MCF 10A (cell line): ENCODE measurements at regions of chr14 and their contacts with region 1.

Region 1: DNA sequence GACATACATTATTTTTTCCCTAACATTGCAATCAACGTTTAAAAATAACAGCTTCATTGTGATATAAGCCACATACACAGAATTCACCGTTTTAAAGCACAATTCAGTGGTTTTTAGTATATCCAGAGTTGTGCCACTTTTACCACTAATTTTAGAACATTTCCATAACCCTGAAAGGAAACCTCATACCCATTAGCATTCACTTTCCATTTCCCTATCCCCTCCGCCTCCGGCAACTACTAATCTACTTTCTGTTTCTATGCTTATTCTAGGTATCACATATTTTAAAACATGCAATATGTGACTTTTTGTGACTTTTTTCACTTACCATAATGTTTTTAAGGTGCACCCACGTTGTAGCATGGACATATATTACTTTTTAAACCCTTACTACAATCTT is 55.6 kb upstream of the ISM2 start:
- DNase-seq: no peak
- H3K4me3 Mint-ChIP-seq: no peak overlapping the region
- H3K27ac Mint-ChIP-seq: no peak overlapping the region
- H3K4me1 Mint-ChIP-seq: no peaks in the 10 kb centered on the region
- H3K27me3 Mint-ChIP-seq: no peaks in the 10 kb centered on the region
- CTCF ChIP-seq: no peak

Region 2: GRCh38 chr14:77301103-77301502 is 253.1 kb before region 1 on chr14:
- CTCF ChIA-PET with region 1: interaction called, 12 read pairs
- POLR2A ChIA-PET with region 1: no interaction called
- intact Hi-C with region 1: loop called (anchors 1 kb)
- DNase-seq: peak; percentile 75
- H3K4me3 Mint-ChIP-seq: no peak overlapping the region
- H3K27ac Mint-ChIP-seq: no peak overlapping the region
- H3K4me1 Mint-ChIP-seq: peaks cover 24% of the 10 kb centered on the region
- H3K27me3 Mint-ChIP-seq: no peaks in the 10 kb centered on the region
- CTCF ChIP-seq: peak; percentile 83

Region 3: GRCh38 chr14:77542421-77543239 is 11.6 kb before region 1 on chr14:
- CTCF ChIA-PET with region 1: interaction called, 15 read pairs
- POLR2A ChIA-PET with region 1: interaction called, 4 read pairs
- intact Hi-C with region 1: no loop called
- DNase-seq: no peak
- H3K4me3 Mint-ChIP-seq: no peak overlapping the region
- H3K27ac Mint-ChIP-seq: no peak overlapping the region
- H3K4me1 Mint-ChIP-seq: no peaks in the 10 kb centered on the region
- H3K27me3 Mint-ChIP-seq: no peaks in the 10 kb centered on the region
- CTCF ChIP-seq: no peak

Region 4: GRCh38 chr14:77565289-77565993 is 11.2 kb after region 1 on chr14:
- CTCF ChIA-PET with region 1: interaction called, 12 read pairs
- POLR2A ChIA-PET with region 1: no interaction called
- intact Hi-C with region 1: no loop called
- DNase-seq: peak; percentile 48
- H3K4me3 Mint-ChIP-seq: no peak overlapping the region
- H3K27ac Mint-ChIP-seq: peak overlapping the region; percentile 39
- H3K4me1 Mint-ChIP-seq: peaks cover 7% of the 10 kb centered on the region
- H3K27me3 Mint-ChIP-seq: no peaks in the 10 kb centered on the region
- CTCF ChIP-seq: no peak

Region 5: DNA sequence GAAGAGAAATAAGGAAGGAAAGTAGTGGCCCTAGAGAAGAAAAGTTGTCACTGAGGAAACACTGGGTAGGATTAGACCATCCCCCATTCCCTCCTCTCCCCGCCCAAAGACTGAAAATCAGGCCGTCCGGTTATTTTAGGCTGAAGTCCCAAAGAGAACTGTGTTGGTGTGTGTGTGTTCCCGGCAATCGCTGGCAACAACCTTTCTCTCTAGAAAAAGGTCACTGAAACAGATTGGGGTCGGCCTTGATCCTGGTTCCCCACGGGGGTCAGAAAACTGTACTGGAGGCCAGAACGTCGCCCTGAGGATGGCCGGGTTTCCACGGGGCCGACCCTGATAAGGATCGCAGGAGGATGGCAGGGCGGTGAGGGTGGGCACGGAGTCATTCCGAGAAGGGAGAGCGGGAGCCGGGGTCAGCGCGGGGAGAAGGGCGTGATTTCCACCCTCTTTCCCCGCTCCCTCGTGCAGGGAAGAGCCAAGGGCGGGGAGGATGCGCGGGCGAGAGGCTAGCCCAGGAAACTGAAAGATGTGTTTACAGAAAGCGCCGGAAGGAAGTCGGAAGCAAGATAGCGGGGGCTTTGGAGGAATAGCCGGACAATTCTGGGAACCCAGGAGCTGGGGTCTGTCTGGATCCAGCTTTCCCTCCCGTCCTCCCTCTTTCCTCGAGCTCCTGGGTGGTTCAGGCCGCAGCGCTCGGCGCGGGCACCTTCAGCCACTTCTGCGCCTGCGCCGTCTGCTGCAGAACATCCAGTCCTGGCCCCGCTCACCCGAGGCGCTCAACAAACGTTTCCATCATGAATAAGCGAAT is 87.5 kb after region 1 on chr14:
- CTCF ChIA-PET with region 1: no interaction called
- POLR2A ChIA-PET with region 1: no interaction called
- intact Hi-C with region 1: no loop called
- DNase-seq: peak; percentile 43
- H3K4me3 Mint-ChIP-seq: peak overlapping the region; percentile 50
- H3K27ac Mint-ChIP-seq: no peak overlapping the region
- H3K4me1 Mint-ChIP-seq: no peaks in the 10 kb centered on the region
- H3K27me3 Mint-ChIP-seq: no peaks in the 10 kb centered on the region
- CTCF ChIP-seq: no peak